ENCODE measurements at regions of chr1 and their contacts with region 1.

Region 1: GRCh38 chr1:25608488-25609178 is 8.0 kb upstream of the MAN1C1 start:
- DNase-seq: peak; percentile 93
- H3K4me3 ChIP-seq: no peak overlapping the region
- H3K27ac ChIP-seq: no peak overlapping the region
- H3K4me1 ChIP-seq: peaks cover 16% of the 10 kb centered on the region
- H3K27me3 ChIP-seq: no peaks in the 10 kb centered on the region
- CTCF ChIP-seq: peak; percentile 70 to 78 (median 77)
- POLR2A ChIP-seq: no peak

Region 2: DNA sequence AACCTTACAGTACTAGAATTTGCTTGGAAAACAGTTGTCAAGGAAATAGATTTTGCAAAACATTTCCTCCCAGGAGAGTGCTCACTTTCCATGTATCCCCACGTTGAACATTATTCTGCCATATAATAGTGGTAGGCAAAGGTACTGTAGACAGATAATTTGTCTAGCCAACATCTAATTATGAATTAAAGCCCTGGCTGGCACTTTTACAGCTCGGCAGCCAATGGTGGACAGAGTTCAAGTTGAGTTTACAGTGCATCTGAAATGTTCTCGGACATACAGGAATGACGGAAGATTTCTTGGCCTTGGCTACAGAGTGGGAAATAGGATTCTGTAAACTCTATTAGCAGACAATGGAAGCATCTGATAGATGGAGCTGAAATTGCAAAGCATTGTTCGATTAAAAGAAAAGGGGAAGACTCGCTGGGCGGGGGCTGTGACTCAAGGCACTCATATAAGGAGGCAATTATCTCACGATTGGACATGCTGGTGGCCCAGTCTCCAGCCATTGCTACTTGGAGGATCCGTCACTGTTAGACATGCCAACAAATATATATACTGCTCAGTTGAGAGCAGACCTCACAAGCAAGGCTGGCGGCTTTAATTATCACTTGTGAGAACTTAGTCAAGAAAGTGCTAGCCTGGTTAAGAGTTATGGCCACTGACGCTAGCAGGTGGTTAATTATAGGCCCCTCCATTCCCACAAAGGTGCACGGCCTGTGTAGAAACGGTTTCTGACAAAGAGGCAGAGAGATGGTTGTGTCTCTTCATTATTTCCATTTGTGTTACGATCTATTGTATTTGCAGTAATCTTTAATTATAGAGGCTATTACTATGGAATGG is 55.9 kb after region 1 on chr1:
- intact Hi-C with region 1: no loop called
- DNase-seq: no peak
- H3K4me3 ChIP-seq: no peak overlapping the region
- H3K27ac ChIP-seq: no peak overlapping the region
- H3K4me1 ChIP-seq: no peaks in the 10 kb centered on the region
- H3K27me3 ChIP-seq: no peaks in the 10 kb centered on the region
- CTCF ChIP-seq: no peak
- POLR2A ChIP-seq: no peak

Region 3: DNA sequence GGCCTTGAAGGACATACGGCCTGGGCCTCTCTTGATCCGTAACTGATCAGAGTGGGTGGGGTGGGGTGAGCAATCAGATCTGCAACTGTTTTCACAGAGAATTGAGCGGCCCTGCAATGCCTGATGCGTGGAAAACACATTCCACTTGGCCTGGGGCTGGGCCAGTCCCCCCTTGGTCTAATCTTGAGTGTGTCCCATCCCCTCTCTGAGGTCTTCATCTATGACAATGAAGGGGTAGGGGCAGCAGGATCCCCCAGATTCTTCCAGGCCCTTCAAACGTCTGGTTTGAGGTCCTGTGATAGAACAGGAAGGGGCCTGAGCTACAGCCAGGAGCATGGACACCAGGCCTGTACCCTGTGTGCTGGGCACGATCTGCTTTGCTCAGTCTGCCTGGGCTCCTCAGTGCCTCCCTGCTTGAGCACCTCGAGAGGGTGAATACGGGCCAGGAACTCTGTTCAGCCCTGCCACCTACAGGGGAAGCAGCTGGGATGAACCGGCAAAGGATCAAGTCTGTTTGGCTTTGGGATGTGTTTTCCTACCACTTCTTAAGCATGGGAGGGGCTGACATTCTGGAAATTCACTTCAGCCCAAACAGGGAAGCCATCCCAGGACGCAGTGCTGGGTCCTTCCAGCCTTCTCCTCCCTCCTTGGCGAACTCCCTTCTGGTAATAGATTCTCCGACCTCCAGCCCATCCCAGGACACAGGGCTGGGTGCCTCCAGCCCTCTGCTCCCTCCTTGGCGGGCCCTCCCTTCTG is 135.4 kb after region 1 on chr1:
- intact Hi-C with region 1: no loop called
- DNase-seq: peak; percentile 86
- H3K4me3 ChIP-seq: no peak overlapping the region
- H3K27ac ChIP-seq: peak overlapping the region; percentile 62 to 76
- H3K4me1 ChIP-seq: peaks cover 23% of the 10 kb centered on the region
- H3K27me3 ChIP-seq: no peaks in the 10 kb centered on the region
- CTCF ChIP-seq: peak in 2 of 3 experiments; percentile 19 to 32
- POLR2A ChIP-seq: no peak

Region 4: DNA sequence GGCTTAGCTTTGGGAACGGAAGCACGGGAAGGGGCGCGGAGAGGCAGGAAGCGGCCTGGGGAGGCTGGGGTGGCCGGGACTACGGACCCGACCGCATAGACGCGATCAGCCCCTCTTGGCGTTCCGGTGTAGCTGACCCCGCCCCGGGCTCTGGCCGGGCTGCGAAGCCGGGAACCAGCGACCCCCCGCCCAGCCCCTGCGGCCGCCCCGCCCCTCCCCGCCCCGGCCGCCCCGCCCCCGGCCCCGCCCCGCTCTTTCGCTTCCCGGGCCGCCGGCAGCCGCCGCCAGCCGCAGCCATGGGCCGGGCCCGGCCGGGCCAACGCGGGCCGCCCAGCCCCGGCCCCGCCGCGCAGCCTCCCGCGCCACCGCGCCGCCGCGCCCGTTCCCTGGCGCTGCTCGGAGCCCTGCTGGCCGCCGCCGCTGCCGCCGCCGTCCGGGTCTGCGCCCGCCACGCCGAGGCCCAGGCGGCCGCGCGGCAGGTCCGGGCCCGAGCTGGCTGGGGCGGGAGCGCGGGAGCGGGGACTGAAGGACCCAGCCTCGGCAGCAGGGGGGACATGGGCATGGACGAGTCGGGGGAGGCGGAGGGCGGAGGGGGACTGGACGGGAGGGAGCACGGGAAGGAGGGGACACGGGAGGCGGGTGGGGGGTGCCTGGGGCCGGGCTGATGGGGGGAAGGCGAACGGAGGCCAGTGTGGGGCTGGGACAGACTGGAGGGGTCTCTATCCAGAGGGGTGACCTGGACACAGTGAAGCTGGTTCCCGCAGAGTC is 191.5 kb after region 1 on chr1 and contains the start of gene SELENON:
- intact Hi-C with region 1: loop called (anchors 2 kb)
- DNase-seq: peak; percentile 40
- H3K4me3 ChIP-seq: peak within 1 kb of the TSS; percentile 56 to 69
- H3K27ac ChIP-seq: peak within 1 kb of the TSS; percentile 9 to 75
- H3K4me1 ChIP-seq: peaks cover 12% of the 10 kb centered on the region
- H3K27me3 ChIP-seq: no peaks in the 10 kb centered on the region
- CTCF ChIP-seq: no peak
- POLR2A ChIP-seq: no peak
- total RNA-seq, gene SELENON: 17.2 to 29.8 TPM

Region 5: DNA sequence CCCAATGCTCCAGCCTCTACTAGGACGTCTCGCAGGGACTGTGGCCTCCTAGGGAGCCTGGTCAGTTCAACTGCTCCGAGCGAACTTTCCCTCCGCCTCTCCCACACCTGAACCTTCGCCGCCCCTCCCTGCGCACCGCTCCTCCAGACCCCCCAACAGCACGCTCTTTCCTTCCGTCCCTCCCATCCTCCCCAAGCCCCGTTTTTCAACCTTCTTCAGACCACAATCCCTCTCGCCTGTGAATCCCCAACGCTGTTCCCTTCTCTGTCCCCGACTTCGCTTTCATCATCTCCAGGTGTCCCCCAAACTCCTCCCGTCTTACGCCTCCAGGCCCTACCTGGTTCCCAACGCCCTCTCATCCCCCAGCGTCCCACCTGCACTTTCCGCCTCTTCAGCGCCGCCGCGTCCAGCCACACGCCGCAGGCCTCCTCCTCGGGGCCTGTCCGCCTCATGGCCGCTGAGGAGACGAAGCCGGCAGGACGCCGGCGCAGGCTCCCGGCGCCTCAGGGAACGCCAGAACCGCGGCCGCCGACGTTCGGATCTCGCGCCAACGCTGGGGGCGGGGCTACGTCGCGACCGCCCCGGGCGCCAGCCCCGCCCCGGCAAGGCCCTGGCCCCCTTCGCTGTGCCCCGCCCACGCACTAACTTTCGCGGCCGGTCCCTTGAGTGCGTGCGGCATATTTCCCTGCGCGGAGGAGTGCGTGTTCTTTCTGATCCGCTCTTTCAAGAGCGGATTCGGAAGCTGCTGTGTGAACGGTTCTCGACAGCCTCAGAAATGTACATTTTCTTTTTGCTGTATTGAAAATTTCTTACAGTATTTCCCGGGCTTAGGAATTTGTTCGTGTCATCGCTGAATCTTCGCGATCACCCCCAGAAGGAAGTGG is 250.5 kb after region 1 on chr1 and contains the start of gene AUNIP:
- intact Hi-C with region 1: no loop called
- DNase-seq: peak; percentile 91
- H3K4me3 ChIP-seq: peak within 1 kb of the TSS; percentile 62 to 66
- H3K27ac ChIP-seq: peak within 1 kb of the TSS; percentile 47 to 82
- H3K4me1 ChIP-seq: peaks cover 3% of the 10 kb centered on the region
- H3K27me3 ChIP-seq: no peaks in the 10 kb centered on the region
- CTCF ChIP-seq: no peak
- POLR2A ChIP-seq: no peak
- total RNA-seq, gene AUNIP: 14.1 to 22.5 TPM

Measured in testis (tissue), 5 donors.